ENCODE measurements at regions of chr20 and their contacts with region 1.

Region 1: DNA sequence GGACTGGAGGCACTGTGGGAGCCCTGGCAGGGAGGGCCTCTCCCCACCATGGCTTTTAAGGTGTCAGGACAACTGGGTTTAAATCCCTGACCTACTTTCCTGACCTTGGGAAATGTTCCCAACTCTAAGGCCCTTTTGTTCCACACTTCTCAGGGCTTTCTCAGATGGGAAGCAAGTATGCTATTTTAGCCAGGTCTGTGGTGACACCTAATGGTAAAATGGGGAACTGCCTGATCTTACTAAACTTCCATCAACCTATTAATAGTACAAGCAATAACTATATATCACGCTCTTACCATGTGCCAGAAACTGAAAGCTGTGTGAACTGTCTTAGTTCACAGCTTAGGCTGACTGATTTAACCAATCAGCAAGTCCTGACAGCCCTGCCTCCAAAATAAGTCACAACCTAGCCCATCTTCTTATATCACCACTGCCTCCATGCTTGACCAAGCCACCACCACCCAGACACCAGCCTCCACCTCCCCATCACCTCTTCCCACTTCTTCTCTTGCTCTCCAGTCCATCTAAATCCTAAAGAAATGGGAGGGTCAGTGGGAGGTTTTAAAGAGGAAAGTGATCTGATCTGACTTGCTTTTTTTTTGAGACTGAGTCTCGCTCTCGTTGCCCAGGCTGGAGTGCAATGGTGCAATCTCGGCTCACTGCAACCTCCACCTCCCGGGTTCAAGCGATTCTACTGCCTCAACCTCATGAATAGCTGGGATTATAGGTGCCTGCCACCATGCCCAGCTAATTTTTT is 6.9 kb upstream of the BLCAP start:
- DNase-seq: no peak
- ATAC-seq: peak; percentile 96
- H3K4me3 ChIP-seq: no peak overlapping the region
- H3K27ac ChIP-seq: no peak overlapping the region
- H3K4me1 ChIP-seq: no peaks in the 10 kb centered on the region
- H3K27me3 ChIP-seq: no peaks in the 10 kb centered on the region
- CTCF ChIP-seq: peak; percentile 88

Region 2: DNA sequence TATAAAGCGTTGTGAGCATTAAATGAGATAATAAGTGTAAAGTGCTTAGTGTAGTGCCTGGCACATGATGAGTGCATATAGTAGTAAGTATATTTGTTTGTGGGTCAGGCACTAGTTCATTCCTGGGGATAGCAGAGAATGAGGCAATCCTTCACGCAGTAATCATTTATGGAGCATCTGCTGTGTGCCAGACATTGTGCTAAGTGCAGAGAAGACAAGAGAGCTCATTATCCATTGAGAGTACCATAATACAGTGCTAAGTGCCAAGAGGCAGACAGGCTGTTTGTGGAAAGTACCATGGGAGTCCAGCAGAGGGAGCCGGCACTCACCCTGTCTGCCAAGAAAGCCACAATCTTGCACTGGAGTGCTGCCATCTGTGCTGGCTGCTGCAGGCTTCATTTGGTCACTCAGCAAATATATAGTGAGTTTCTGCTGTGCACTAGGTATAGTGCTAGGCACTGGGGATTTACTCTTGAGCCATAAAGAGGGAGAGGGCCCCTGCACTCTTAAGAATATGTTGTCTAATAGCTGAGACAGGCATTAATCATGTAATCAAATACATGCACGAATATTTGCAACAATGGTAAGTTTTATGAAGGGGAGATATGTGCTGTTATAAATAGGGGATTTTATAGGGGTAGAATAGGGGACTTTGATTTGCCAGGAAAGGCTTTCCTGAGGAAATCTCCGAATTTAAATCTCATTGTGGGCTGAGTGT is 342.3 kb before region 1 on chr20:
- intact Hi-C with region 1: loop called (anchors 10 kb)
- DNase-seq: peak; percentile 86
- ATAC-seq: peak; percentile 97
- H3K4me3 ChIP-seq: no peak overlapping the region
- H3K27ac ChIP-seq: no peak overlapping the region
- H3K4me1 ChIP-seq: peaks cover 33% of the 10 kb centered on the region
- H3K27me3 ChIP-seq: no peaks in the 10 kb centered on the region
- CTCF ChIP-seq: peak; percentile 95

Region 3: DNA sequence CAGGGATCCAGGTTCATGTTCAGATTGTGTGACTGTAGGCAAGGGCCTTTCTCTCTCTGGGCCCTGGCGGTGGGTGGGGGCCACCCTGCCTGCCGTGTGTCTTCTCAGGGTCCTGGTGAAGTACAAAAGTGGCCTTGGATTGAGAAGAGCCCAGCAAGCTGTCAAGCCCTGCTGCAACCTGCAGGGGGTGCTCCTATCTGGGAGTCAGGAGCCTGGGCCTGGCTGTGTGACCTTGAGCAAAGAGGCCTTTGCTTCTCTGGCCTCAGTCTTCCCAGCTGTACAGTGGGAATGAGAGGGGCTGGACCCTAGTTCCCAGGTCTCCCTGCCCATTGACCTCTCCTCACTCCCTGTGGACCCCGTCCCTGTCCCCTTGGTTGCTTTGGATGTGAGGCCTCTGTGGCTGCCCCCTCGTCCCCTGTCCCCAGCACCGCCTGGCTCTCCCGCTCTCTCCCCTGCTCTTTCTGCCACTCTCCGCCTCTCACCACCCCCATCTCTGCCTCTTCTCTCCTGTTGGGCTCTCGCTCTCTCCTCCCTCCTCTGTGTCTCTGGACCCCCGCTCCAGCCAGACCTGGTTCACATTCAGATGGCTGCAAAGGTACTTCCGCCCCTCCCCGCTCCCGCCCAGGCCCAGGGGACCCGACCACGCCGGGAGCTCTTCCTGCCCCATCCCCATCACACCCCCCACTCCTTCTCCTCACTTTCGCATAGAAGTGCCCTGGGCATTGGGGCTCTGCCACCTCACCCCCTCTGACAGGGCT is 142.0 kb before region 1 on chr20:
- intact Hi-C with region 1: loop called (anchors 10 kb)
- DNase-seq: no peak
- ATAC-seq: no peak
- H3K4me3 ChIP-seq: no peak overlapping the region
- H3K27ac ChIP-seq: no peak overlapping the region
- H3K4me1 ChIP-seq: no peaks in the 10 kb centered on the region
- H3K27me3 ChIP-seq: no peaks in the 10 kb centered on the region
- CTCF ChIP-seq: no peak

Measured in upper lobe of right lung (tissue), 1 donor.